CD4-positive, alpha-beta T cell (primary cell): ENCODE measurements at regions of chr14 and their contacts with region 1.

Region 1: GRCh38 chr14:35416108-35416750 is 11.7 kb upstream of the NFKBIA start:
- DNase-seq: peak in 10 of 14 experiments; percentile 18 to 92 (median 50)
- ATAC-seq: peak; percentile 49
- H3K4me3 ChIP-seq: no peak overlapping the region
- H3K4me3 Mint-ChIP-seq: no peak overlapping the region
- H3K27ac ChIP-seq: peak overlapping the region; percentile 47 to 54
- H3K27ac Mint-ChIP-seq: peak overlapping the region; percentile 70
- H3K4me1 ChIP-seq: peaks cover 44% of the 10 kb centered on the region
- H3K4me1 Mint-ChIP-seq: peaks cover 43% of the 10 kb centered on the region
- H3K27me3 ChIP-seq: no peaks in the 10 kb centered on the region
- H3K27me3 Mint-ChIP-seq: no peaks in the 10 kb centered on the region
- CTCF ChIP-seq: no peak

Region 2: DNA sequence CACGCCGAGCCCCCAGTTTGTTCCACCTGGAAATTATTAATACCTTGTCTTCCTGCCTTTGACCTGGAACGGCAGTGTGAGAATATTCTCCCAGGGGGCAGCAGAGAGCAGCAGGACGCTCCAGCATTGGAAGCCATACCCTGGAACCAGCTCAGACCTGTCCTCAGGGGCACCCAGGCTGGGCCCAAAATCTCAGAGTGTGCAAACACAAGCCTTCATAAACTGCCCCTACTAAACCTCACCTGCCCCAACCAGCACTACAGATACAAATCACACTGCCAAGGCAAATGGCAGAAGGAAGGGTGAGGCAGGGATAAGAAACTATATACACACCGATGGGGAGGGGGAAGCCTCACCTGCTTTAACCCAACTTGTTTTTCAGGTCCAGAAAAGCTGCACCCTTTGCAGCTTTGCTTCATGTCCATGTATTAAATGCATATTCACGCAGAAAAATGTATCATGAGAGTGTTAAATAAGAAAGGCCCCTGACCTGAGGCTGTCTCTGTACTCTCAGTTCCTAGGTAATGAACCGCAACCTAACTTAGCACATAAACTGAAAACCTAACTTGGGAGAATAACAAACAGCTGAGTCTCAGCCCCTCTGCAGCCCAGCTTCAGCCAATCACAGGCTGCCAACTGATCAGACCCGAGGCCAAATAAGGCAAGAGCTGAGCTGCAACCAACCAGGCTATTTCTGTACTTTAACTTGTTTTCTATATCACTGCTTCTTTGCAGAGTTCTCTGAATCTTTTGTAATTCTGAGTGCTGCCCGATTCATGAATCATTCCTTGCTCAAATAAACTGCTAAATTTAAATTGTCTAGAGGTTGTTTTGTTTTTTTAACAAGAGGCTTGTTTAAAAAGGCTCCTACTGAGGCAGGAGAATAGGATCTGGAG is 1084.3 kb before region 1 on chr14:
- CTCF ChIA-PET with region 1: no interaction called
- POLR2A ChIA-PET with region 1: no interaction called
- intact Hi-C with region 1: loop called (anchors 5 kb)
- DNase-seq: peak; percentile 17 to 72 (median 46)
- ATAC-seq: peak; percentile 64
- H3K4me3 ChIP-seq: no peak overlapping the region
- H3K4me3 Mint-ChIP-seq: no peak overlapping the region
- H3K27ac ChIP-seq: no peak overlapping the region
- H3K27ac Mint-ChIP-seq: no peak overlapping the region
- H3K4me1 ChIP-seq: peaks cover 7% of the 10 kb centered on the region
- H3K4me1 Mint-ChIP-seq: peaks cover 11% of the 10 kb centered on the region
- H3K27me3 ChIP-seq: no peaks in the 10 kb centered on the region
- H3K27me3 Mint-ChIP-seq: no peaks in the 10 kb centered on the region
- CTCF ChIP-seq: peak; percentile 85

Region 3: DNA sequence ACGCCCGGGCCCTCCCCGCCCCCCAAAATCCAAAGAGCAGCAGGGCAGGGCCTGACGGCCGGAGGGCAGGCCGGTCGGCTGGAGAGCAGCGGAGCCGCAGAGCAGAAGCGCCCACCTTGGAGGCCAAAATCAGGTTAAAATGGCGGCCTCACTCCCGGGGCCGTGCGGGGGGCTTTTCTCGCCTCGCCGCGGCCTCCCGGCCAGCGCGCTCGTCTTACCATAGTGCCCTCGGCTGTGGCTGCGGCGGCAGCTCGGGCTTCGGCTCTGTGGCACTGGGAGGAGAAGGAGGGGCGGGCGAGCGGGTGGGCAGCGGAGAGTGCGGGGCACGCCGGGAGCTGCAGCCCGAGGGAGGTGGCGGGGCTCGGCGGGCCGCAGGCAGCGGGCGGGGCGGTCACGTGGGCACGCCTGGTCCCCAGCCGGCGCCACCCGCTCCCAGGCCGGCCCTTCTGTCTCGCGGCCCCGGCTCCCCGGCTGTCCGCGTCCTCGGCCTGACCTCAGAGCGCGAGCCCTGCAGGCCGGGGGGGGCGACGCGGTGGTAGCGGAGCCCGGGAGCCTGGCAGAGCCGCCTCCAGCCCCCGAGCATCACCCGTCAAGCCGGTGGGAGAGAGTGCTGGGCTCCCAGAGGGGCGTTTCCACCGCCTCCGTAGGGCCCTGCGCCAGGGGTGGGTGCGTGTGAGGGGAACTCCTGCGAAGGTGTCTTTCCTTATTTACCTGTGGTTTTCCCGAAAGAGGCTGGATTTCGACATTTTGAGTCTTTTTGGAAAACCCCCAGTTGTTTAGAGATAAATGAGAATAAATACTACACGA is 701.7 kb before region 1 on chr14 and contains the start of gene CFL2:
- CTCF ChIA-PET with region 1: no interaction called
- POLR2A ChIA-PET with region 1: no interaction called
- intact Hi-C with region 1: no loop called
- DNase-seq: peak; percentile 34 to 92 (median 61)
- ATAC-seq: peak; percentile 87
- H3K4me3 ChIP-seq: peak within 1 kb of the TSS; percentile 78
- H3K4me3 Mint-ChIP-seq: peak within 1 kb of the TSS; percentile 94
- H3K27ac ChIP-seq: peak within 1 kb of the TSS; percentile 31 to 52
- H3K27ac Mint-ChIP-seq: peak within 1 kb of the TSS; percentile 90
- H3K4me1 ChIP-seq: peaks cover 9% of the 10 kb centered on the region
- H3K4me1 Mint-ChIP-seq: peaks cover 31% of the 10 kb centered on the region
- H3K27me3 ChIP-seq: no peaks in the 10 kb centered on the region
- H3K27me3 Mint-ChIP-seq: no peaks in the 10 kb centered on the region
- CTCF ChIP-seq: no peak
- total RNA-seq, gene CFL2: 36.4 to 37.9 TPM

Region 4: DNA sequence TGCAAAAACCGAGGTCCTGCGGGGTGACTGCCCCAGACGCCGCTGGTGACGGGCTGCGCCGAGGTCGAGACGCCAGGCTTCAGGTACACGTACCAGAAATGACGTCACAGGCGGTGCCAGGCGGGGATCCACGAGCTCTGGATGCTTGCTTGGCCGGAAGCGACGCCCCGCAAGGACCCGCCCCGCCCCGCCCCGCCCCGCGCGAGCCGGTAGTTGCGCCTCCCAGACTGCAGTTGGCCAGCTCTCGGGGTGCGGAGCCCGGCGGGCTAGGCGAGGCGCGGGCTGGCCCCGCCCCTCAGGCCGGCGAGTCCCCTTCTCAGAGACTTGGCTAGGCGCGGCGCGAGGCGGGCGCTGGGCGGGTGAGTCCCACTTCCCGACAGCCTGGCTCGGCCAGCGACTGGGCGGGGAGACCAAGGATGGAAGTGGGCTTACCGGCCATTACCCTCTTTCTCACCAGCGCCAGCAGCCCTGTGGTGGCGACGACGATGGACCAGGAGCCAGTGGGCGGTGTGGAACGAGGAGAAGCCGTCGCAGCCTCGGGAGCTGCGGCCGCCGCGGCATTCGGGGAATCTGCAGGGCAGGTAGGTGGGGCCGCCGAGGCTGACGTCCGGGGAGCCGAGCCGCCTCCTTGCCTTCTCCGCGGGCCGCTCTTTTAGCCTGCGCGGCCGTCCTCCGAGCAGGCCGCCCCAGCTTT is 370.0 kb before region 1 on chr14 and contains the start of gene FAM177A1:
- CTCF ChIA-PET with region 1: no interaction called
- POLR2A ChIA-PET with region 1: no interaction called
- intact Hi-C with region 1: loop called in 1 of 2 experiments (anchors 5 kb)
- DNase-seq: peak; percentile 94 to 100 (median 98)
- ATAC-seq: peak; percentile 83
- H3K4me3 ChIP-seq: peak within 1 kb of the TSS; percentile 68
- H3K4me3 Mint-ChIP-seq: peak within 1 kb of the TSS; percentile 91
- H3K27ac ChIP-seq: peak within 1 kb of the TSS; percentile 96 to 97
- H3K27ac Mint-ChIP-seq: peak within 1 kb of the TSS; percentile 94
- H3K4me1 ChIP-seq: peaks cover 11% of the 10 kb centered on the region
- H3K4me1 Mint-ChIP-seq: peaks cover 36% of the 10 kb centered on the region
- H3K27me3 ChIP-seq: no peaks in the 10 kb centered on the region
- H3K27me3 Mint-ChIP-seq: no peaks in the 10 kb centered on the region
- CTCF ChIP-seq: no peak
- total RNA-seq, gene FAM177A1: 172 to 186 TPM

Region 5: GRCh38 chr14:35229495-35230089 is 186.6 kb before region 1 on chr14:
- CTCF ChIA-PET with region 1: interaction called, 9 read pairs
- POLR2A ChIA-PET with region 1: no interaction called
- intact Hi-C with region 1: loop called in 1 of 2 experiments (anchors 1 kb)
- DNase-seq: peak in 3 of 14 experiments; percentile 39 to 52 (median 45)
- ATAC-seq: peak; percentile 51
- H3K4me3 ChIP-seq: no peak overlapping the region
- H3K4me3 Mint-ChIP-seq: no peak overlapping the region
- H3K27ac ChIP-seq: no peak overlapping the region
- H3K27ac Mint-ChIP-seq: no peak overlapping the region
- H3K4me1 ChIP-seq: peaks cover 10% of the 10 kb centered on the region
- H3K4me1 Mint-ChIP-seq: peaks cover 19% of the 10 kb centered on the region
- H3K27me3 ChIP-seq: no peaks in the 10 kb centered on the region
- H3K27me3 Mint-ChIP-seq: no peaks in the 10 kb centered on the region
- CTCF ChIP-seq: peak; percentile 64

Region 6: GRCh38 chr14:35814371-35815005 is 398.3 kb after region 1 on chr14:
- CTCF ChIA-PET with region 1: no interaction called
- POLR2A ChIA-PET with region 1: no interaction called
- intact Hi-C with region 1: loop called in 1 of 2 experiments (anchors 10 kb)
- DNase-seq: peak; percentile 63 to 90 (median 76)
- ATAC-seq: peak; percentile 91
- H3K4me3 ChIP-seq: no peak overlapping the region
- H3K4me3 Mint-ChIP-seq: no peak overlapping the region
- H3K27ac ChIP-seq: no peak overlapping the region
- H3K27ac Mint-ChIP-seq: no peak overlapping the region
- H3K4me1 ChIP-seq: no peaks in the 10 kb centered on the region
- H3K4me1 Mint-ChIP-seq: peaks cover 2% of the 10 kb centered on the region
- H3K27me3 ChIP-seq: no peaks in the 10 kb centered on the region
- H3K27me3 Mint-ChIP-seq: no peaks in the 10 kb centered on the region
- CTCF ChIP-seq: peak; percentile 76